Naive thymus-derived CD4-positive, alpha-beta T cell (primary cell): ENCODE measurements at regions of chr13 and their contacts with region 1.

Region 1: DNA sequence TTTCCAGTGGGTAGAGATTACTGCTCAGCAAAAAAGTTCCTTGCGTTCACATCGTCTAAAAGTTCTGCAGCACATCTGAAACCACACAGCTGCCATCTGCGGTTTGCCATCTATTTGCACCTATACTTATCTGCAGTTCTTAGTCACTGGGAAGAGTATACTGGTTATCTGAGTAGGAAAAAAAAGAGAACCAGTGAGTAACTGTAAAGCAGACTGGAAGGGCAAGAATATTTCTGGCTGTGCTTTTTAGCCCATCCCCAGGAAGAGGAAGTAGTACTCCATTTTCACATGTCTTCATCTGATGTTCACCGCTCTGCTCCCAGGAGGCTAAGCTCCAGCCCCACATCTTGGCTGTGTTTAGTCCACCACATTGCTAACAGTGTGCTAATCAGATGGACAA is 35.6 kb downstream of the EFNB2 start:
- DNase-seq: no peak
- ATAC-seq: peak; percentile 29
- H3K4me3 ChIP-seq: no peak overlapping the region
- H3K4me3 Mint-ChIP-seq: no peak overlapping the region
- H3K27ac ChIP-seq: no peak overlapping the region
- H3K27ac Mint-ChIP-seq: no peak overlapping the region
- H3K4me1 ChIP-seq: no peaks in the 10 kb centered on the region
- H3K4me1 Mint-ChIP-seq: peaks cover 0 to 9% (median 0%) of the 10 kb centered on the region in 7 donors
- H3K27me3 ChIP-seq: no peaks in the 10 kb centered on the region
- H3K27me3 Mint-ChIP-seq: peaks cover 51 to 59% (median 54%) of the 10 kb centered on the region in 5 donors

Region 2: GRCh38 chr13:105565136-105565727 is 934.7 kb before region 1 on chr13:
- CTCF ChIA-PET with region 1: no interaction called
- POLR2A ChIA-PET with region 1: no interaction called
- intact Hi-C with region 1: no loop called
- DNase-seq: no peak
- ATAC-seq: no peak
- H3K4me3 ChIP-seq: no peak overlapping the region
- H3K4me3 Mint-ChIP-seq: no peak overlapping the region
- H3K27ac ChIP-seq: no peak overlapping the region
- H3K27ac Mint-ChIP-seq: no peak overlapping the region
- H3K4me1 ChIP-seq: no peaks in the 10 kb centered on the region
- H3K4me1 Mint-ChIP-seq: no peaks in the 10 kb centered on the region
- H3K27me3 ChIP-seq: no peaks in the 10 kb centered on the region
- H3K27me3 Mint-ChIP-seq: no peaks in the 10 kb centered on the region

Region 3: DNA sequence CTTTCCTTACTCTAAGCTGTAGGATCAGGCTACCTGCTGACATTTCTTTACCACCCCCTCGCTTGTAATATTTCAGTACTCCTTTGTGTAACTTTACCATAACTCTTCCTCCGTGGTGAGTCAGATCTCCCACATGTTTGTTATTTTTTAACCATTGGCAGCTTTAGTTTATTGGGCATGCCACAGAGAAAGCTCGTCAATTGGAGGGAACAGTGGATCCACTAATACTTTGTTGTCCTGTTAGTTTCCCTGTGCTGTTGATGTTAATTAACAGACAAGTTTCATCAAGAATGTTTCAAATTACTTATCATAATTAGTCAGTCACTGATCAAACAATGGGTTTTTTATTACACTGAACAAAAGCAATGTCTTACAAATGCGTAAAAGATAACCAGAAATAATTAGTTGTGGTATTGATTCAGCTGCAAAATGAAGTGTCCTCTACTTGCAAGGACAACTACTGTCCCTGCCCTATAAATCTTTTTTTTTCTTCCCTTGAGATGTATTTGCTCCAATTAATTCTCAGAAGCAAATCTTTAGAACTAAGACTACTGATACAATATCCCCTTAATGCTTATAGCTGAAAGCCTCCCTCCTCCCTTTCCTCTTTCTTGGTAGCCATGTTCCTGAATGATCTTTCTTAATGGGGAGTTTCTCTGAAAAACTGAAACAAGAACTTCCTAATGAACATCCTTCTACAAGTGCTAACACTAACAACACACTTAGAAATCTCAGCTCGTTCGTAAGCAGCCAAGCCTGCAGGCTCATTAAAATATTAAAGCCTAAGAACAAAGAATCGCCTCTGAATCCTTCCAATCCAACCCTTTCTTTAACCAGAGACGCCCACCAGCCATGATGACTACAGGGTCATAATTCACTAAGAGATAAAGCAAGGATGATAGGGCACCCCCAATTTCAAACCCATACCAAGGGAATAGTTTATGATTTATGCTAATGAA is 13.4 kb after region 1 on chr13:
- CTCF ChIA-PET with region 1: no interaction called
- POLR2A ChIA-PET with region 1: interaction called, 3 read pairs
- intact Hi-C with region 1: loop called in 1 of 2 experiments (anchors 2 kb)
- DNase-seq: no peak
- ATAC-seq: no peak
- H3K4me3 ChIP-seq: no peak overlapping the region
- H3K4me3 Mint-ChIP-seq: no peak overlapping the region
- H3K27ac ChIP-seq: no peak overlapping the region
- H3K27ac Mint-ChIP-seq: no peak overlapping the region
- H3K4me1 ChIP-seq: no peaks in the 10 kb centered on the region
- H3K4me1 Mint-ChIP-seq: peaks cover 0 to 1% (median 0%) of the 10 kb centered on the region in 7 donors
- H3K27me3 ChIP-seq: peaks cover 0 to 3% of the 10 kb centered on the region in 2 donors
- H3K27me3 Mint-ChIP-seq: peaks cover 19 to 40% (median 27%) of the 10 kb centered on the region in 5 donors